ENCODE measurements at regions of chr17 and their contacts with region 1.

Region 1: GRCh38 chr17:6913608-6914443 is 82.0 kb upstream of the ALOX12 start:
- DNase-seq: peak; percentile 76
- ATAC-seq: peak; percentile 89
- H3K4me3 ChIP-seq: peak overlapping the region; percentile 31
- H3K27ac ChIP-seq: no peak overlapping the region
- H3K4me1 ChIP-seq: peaks cover 5% of the 10 kb centered on the region
- H3K27me3 ChIP-seq: no peaks in the 10 kb centered on the region
- CTCF ChIP-seq: peak; percentile 76

Region 2: GRCh38 chr17:7004398-7005253 is 90.8 kb after region 1 on chr17:
- intact Hi-C with region 1: loop called (anchors 5 kb)
- DNase-seq: no peak
- ATAC-seq: peak; percentile 84
- H3K4me3 ChIP-seq: no peak overlapping the region
- H3K27ac ChIP-seq: no peak overlapping the region
- H3K4me1 ChIP-seq: no peaks in the 10 kb centered on the region
- H3K27me3 ChIP-seq: no peaks in the 10 kb centered on the region
- CTCF ChIP-seq: peak; percentile 78